Pancreas (tissue), 10 donors: ENCODE measurements at regions of chr1 and their contacts with region 1.

Region 1: GRCh38 chr1:229452956-229453801 is 19.3 kb upstream of the ACTA1 start:
- DNase-seq: no peak
- ATAC-seq: peak in 1 of 4 donors; percentile 37
- H3K4me3 ChIP-seq: no peak overlapping the region
- H3K27ac ChIP-seq: no peak overlapping the region
- H3K4me1 ChIP-seq: no peaks in the 10 kb centered on the region
- H3K27me3 ChIP-seq: no peaks in the 10 kb centered on the region
- CTCF ChIP-seq: no peak

Region 2: DNA sequence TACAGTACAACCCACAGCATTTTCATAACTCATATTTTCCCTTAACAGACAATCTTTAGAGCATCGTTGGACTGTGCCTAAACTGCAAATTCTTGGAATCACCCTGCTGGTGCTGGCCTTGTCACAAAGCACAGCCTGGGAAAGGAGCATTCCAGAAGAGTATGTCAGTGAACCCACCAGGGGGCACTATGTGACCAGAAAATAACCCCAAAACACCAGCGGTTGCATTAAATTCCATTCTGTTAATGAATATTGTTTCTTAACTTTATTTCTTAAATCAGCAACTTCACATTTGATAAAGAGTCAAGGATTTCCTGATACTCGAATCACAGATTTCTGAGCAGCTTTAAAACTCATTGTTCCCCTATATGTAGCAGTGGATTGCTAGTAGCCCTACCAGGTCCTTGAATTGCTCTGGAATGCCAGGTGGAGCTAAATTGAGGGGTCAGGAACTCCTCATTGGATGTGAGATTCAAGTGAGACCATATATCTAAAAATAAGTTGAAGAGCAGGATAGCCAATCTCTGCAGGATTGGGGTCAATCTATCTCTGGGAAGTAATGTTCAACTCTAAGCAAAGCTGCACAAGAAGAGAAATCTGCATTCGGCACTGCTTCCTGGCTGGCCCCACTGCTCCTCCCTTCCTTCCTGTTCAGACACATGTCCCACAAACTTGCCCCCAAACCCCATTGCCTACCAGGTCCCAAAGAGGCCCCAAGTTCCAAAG is 195.0 kb before region 1 on chr1:
- intact Hi-C with region 1: loop called in 1 of 3 experiments (anchors 10 kb)
- DNase-seq: peak in 3 of 6 donors; percentile 48 to 79 (median 50)
- ATAC-seq: peak; percentile 82 to 94 (median 91)
- H3K4me3 ChIP-seq: no peak overlapping the region
- H3K27ac ChIP-seq: no peak overlapping the region
- H3K4me1 ChIP-seq: peaks cover 0 to 4% (median 0%) of the 10 kb centered on the region in 3 donors
- H3K27me3 ChIP-seq: no peaks in the 10 kb centered on the region
- CTCF ChIP-seq: peak; percentile 42 to 75 (median 63)

Region 3: GRCh38 chr1:229339520-229339919 is 113.7 kb before region 1 on chr1:
- intact Hi-C with region 1: no loop called
- DNase-seq: no peak
- ATAC-seq: no peak
- H3K4me3 ChIP-seq: no peak overlapping the region
- H3K27ac ChIP-seq: no peak overlapping the region
- H3K4me1 ChIP-seq: peaks cover 0 to 4% (median 0%) of the 10 kb centered on the region in 3 donors
- H3K27me3 ChIP-seq: no peaks in the 10 kb centered on the region
- CTCF ChIP-seq: no peak

Region 4: GRCh38 chr1:229558571-229559335 is 105.6 kb after region 1 on chr1 and contains the start of gene ABCB10:
- intact Hi-C with region 1: no loop called
- DNase-seq: peak; percentile 96 to 99 (median 98)
- ATAC-seq: peak; percentile 89 to 95 (median 93)
- H3K4me3 ChIP-seq: peak within 1 kb of the TSS; percentile 42 to 89 (median 84)
- H3K27ac ChIP-seq: peak within 1 kb of the TSS; percentile 73 to 86 (median 80)
- H3K4me1 ChIP-seq: peaks cover 0 to 26% (median 0%) of the 10 kb centered on the region in 3 donors
- H3K27me3 ChIP-seq: no peaks in the 10 kb centered on the region
- CTCF ChIP-seq: peak; percentile 47 to 79 (median 64)
- total RNA-seq, gene ABCB10: 4.9 to 8.6 (median 7.2) TPM